ENCODE measurements at regions of chr5 and their contacts with region 1.

Region 1: DNA sequence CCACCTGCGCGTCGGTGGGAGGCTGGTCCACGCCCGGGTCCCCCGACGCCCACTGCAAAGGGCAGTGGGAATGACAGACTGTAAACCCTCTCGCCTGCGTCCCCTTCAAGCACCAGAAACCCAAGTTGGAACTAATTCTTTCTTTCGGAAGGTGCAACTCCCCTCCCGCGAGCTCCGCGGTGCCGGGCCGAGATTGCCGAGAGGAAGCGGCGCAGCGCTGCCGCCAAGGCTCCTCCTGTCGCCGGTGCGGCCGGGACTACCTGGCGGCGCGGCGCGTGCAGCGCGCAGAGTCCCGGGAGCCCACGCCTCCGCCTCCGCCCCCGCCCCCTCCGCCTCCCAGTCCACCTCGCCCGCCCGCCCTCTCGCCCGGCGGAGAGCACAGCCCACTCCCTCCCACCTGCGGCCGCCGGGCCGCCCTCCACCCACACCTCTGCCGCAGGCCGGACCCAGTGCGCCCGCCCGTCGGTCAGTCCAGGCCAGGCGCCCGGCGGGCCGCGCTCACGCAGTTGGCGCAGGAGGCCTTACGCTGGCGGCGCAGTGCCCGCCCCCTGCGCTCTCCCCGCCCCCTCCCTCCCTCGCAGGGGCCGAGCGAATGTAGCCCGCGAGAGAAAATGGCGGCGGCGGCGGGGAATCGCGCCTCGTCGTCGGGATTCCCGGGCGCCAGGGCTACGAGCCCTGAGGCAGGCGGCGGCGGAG is at the start of gene MAP3K1:
- DNase-seq: peak in 41 of 42 donors; percentile 53 to 90 (median 81)

Region 2: DNA sequence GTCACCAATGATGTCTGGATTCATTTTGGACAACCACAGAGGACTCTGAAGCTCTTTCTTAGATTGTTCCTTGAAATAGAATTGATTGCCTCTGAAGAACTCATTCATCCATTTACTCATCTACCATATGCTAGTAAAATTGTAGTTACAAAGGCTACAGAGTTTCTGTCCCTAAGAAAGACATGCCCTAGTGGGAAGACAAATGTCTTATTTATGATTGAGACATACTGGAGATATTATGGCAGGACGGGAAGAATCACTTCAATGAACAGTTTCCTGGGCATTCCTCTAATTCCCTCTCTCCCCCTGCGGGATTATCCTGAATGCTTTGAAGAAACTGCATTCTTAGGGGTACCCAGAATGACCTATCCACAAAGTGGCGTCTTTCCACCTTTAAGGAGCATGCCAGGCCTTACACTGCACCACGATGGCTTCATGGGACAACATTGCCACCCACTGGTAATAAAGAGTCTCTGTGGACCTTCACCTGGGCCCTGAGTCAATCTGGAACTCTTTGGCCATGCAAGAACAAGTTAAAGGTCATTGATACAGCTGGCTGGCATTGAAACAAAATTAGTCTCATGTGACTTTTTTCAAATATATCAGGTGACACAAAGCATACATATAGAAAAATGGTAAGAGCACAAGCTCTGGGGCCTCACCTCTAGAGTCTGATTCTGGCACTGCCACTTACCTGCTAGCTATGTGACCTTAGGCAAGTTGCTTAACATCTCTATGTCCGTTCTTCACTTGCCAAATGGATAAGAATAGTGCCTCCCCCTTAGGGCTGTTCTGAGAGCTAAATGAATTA is 614.0 kb before region 1 on chr5:
- intact Hi-C with region 1: no loop called
- DNase-seq: peak in 39 of 42 donors; percentile 11 to 73 (median 50)

Region 3: DNA sequence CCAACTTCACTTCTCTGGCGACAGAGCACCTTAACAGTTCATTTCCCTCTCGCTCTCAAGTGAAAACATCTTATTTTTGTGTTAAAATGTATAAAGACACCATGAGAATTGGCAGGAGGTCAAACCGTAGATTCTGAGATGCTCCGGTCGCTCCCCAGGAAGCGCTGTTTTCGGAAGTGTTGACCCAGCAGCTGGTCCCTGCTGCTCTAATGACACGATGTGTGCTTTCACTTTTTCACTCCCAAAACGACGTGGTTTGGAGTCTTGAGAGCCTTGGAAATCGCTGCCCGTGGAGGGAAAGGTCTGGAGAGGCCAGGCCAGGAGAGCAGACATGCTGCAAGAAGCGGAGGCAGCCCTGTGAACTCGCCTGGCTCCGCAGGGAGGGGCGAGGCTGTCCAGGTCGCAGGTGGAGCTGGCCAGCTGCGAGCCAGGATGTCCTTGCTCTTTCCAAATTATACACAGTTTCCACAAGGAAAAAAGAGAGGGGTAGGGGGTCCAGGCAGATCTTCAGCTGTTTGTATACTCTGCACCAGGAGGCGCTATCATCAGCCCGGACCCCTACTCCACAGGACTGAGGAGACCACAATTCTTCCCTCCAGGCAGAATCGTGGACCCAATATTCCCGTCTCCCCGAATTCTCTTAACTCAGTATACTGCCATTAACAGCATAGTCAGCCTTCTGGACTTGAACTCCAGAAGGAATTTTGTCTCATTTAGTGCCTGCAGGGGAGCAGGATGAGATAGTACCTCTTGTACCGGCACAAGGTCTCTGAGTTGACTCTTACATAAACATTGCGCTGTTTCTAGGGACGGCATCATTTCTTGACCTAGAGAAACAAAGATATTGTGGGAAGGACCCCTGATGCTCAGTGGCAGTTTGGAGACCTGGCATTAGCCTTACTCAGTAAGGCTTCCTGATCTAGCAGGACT is 333.4 kb before region 1 on chr5:
- intact Hi-C with region 1: loop called (anchors 10 kb)
- DNase-seq: peak in 39 of 42 donors; percentile 12 to 65 (median 34)

Region 4: DNA sequence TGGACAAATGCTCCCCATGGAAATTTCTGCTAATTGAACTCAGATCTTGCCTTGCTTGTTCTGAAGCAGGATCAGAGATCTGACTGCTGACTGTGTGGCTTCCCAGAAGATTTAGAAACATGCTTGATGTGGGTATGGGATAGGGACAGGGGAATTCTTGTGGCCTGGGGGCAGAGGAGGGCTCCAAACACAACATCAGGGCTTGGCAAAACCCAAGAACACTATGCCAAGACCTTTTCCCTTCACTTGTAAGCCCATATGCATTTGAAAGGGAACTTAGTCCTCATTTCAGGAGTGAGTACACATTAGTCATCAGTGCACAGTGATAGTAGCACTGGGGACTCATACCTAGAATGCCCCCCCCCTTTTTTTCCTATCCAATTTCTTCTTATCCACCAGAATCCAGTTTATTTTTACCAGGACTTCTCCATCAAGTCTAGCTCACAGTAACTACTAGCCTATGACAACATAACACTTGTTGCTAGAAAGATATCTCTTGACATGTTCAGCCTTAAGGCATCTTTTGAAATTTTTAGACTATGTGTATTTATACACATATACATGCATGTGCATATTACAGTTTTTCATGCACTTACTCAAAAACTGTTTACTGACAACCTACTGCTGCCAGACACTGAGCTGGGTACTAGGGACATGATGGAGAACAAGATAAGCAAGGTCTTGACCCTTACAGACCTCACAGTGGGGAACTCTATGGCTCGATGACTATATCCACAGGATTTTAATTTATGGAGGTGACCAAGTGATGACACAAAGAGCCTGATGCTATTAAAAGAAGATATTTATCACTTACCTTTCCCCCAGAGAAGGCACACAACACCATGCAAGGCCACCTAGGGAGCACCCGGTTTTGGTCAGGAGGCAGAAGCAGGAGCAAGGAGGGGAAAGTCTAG is 158.0 kb before region 1 on chr5:
- intact Hi-C with region 1: loop called (anchors 10 kb)
- DNase-seq: no peak

Region 5: DNA sequence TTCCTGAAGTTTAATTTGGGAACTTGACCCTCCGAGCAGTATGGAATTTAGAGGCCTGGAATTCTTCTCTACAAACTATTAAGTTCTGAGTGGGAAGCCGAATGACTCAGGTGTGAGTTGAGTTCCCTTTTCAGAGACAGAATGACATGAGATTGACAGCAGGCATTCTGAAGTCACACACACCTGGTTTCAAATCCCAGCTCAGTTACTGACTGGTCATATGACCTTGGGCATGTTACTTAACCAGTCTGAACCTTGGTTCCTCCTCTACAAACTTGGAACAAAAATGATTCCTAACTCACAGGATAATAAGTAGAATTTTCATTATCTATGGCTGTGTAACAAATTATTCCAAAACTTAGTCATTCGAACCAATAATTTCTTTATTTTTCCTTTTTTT is 313.2 kb after region 1 on chr5:
- intact Hi-C with region 1: no loop called
- DNase-seq: no peak

Region 6: GRCh38 chr5:57186194-57186593 is 371.1 kb after region 1 on chr5:
- intact Hi-C with region 1: no loop called
- DNase-seq: no peak

Measured in head of caudate nucleus (tissue), 42 donors.